Uterus (tissue), 4 donors: ENCODE measurements at regions of chr6 and their contacts with region 1.

Region 1: DNA sequence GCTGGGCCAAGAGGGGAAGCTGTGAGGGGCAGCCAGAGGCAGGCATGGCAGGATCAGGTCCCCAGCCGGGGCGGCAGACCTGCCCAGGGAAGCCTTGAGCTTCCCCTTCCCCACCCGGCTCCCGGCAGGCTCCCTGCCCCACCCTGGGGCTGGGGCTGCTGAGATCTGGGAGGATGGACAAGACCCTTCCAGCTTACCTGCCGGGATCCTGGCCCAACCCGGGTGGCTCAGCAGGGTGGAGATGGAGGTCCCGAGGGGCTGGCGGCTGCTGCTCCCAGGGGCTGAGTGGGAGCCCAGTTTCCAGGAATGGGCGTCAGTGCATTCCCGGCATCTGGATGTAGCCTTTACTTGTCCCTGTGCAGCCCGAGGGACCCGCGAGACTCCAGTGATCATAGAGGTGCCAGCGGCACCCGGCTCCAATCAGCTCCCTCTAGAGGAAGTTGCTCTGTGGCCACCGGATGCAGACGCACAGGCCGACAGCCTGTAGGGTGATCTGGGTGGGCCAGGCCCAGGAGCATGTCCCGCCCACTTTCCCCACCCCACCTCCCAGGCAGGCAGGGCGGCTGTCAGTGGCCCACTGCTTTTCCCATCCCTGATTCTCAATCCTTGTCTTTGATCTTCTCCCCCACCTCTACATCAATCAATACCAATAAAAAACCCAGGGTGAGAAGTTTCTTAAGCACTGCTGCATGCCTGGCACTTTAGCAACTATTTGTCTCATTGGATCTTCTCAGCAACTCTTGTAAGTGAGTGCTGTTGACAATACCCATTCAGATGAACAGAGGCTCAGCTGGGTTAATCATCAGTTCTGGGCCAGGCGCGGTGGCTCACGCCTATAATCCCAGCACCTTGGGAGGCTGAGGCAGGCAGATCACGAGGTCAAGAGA is at the start of gene BAK1:
- DNase-seq: peak; percentile 88 to 92
- H3K4me3 ChIP-seq: peak within 1 kb of the TSS; percentile 80 to 90
- H3K27ac ChIP-seq: peak within 1 kb of the TSS; percentile 81 to 87
- H3K4me1 ChIP-seq: peaks cover 5 to 11% of the 10 kb centered on the region in 2 donors
- H3K27me3 ChIP-seq: no peaks in the 10 kb centered on the region
- CTCF ChIP-seq: peak; percentile 38 to 65 (median 49)
- POLR2A ChIP-seq: peak; percentile 64 to 66
- total RNA-seq, gene BAK1: 0.88 to 15.3 (median 6.1) TPM

Region 2: GRCh38 chr6:33633462-33634158 is 53.5 kb after region 1 on chr6:
- intact Hi-C with region 1: loop called (anchors 10 kb)
- DNase-seq: peak; percentile 58 to 72
- H3K4me3 ChIP-seq: peak overlapping the region; percentile 24 to 40
- H3K27ac ChIP-seq: peak overlapping the region; percentile 8 to 33
- H3K4me1 ChIP-seq: peaks cover 5 to 7% of the 10 kb centered on the region in 2 donors
- H3K27me3 ChIP-seq: no peaks in the 10 kb centered on the region
- CTCF ChIP-seq: no peak
- POLR2A ChIP-seq: peak in 1 of 2 donors; percentile 26

Region 3: GRCh38 chr6:33696548-33697518 is 116.8 kb after region 1 on chr6:
- intact Hi-C with region 1: loop called (anchors 10 kb)
- DNase-seq: peak; percentile 56 to 66
- H3K4me3 ChIP-seq: no peak overlapping the region
- H3K27ac ChIP-seq: peak overlapping the region; percentile 50 to 64
- H3K4me1 ChIP-seq: peaks cover 0 to 17% of the 10 kb centered on the region in 2 donors
- H3K27me3 ChIP-seq: no peaks in the 10 kb centered on the region
- CTCF ChIP-seq: no peak
- POLR2A ChIP-seq: no peak

Region 4: DNA sequence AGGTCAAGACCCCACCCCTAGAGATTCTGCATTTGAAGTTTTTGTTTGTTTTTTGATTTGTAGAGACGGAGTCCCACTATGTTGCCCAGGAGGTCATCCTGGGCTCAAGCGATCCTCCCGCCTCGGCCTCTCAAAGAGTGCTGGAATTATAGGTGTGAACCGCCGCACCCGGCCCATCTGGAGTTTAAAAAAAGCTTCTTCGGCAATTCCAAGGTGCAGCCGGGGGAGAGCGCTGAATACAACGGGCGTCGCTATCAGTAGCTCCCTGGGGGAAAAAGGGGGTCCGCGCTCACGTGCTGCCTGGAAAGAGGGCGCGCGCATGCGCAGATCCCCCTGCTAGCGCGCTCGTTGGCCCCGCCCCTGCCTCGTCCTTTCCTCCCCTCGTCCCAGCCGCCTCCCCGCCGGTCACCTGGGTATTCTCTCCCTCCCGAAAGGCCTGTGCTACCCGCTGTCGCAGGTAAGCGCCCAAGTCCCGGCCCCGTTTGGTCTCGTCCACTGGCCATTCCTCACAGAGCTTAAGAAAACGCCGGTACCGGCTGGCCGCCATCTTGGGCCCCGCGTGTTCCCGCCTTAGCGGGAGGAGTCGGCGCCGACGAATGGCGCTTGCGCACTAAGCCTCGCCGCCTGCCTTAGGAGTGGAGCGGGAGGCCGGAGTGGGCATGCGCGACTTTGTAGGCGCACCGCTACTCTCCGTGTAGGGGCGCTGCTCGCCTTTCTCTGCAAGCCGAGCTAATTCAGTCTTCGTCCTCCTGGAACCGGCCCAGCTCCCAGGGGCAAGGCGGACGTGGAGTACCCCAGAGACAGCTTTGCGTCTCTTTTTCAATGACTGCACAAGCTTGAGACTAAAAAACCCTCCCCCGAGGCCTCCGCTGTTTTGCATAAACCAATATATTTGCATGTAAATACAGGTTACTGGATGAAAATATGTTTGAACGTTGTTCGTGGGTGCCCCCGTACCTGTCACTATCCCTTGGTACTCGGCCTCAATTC is 131.4 kb after region 1 on chr6 and contains the start of gene UQCC2:
- intact Hi-C with region 1: no loop called
- DNase-seq: peak; percentile 96 to 98
- H3K4me3 ChIP-seq: peak within 1 kb of the TSS; percentile 81 to 91
- H3K27ac ChIP-seq: peak within 1 kb of the TSS; percentile 93 to 96
- H3K4me1 ChIP-seq: peaks cover 5 to 7% of the 10 kb centered on the region in 2 donors
- H3K27me3 ChIP-seq: no peaks in the 10 kb centered on the region
- CTCF ChIP-seq: peak; percentile 73 to 87 (median 81)
- POLR2A ChIP-seq: peak; percentile 26 to 88
- total RNA-seq, gene UQCC2: 10.0 to 63.2 (median 30.9) TPM

Region 5: DNA sequence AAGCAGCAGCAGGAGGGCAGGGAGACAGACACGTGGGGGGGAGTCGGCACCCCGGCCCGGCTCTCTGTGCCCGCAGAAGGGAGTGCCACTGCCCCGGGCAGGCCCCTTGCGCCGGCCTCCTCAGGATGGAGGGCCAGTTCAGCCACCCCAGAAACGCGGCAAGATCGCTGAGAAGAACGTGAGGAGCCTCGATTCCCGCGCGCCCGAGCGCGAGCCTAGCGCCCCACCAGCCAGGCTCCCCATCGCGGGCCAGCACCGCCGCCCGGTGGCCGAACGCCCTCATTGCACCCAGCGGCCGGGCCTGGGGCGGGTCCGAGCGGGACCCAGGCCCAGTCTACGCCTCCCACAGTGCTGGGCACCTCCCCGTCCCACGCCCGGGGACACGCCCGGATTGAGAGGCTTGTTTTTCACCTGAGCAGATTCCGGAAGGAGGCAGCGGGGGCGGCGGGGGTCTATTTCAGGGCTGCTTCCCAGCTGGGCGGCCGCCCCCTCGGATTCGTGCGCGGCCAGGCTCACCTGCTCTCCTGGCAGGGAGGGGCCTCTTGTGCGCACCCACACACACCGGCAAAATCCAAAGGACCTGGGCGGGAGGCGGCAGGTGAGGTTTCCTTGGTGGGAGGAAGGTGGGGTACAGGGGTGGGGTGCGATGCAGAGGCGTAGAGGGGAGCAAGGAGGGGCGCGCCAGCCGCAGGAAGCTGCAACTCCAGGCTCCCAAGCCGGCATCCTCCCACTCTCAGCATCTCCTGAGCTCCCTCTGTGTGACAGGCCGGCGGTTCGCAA is 574.8 kb after region 1 on chr6:
- intact Hi-C with region 1: loop called (anchors 10 kb)
- DNase-seq: peak; percentile 24 to 60
- H3K4me3 ChIP-seq: no peak overlapping the region
- H3K27ac ChIP-seq: no peak overlapping the region
- H3K4me1 ChIP-seq: no peaks in the 10 kb centered on the region
- H3K27me3 ChIP-seq: no peaks in the 10 kb centered on the region
- CTCF ChIP-seq: peak; percentile 89 to 98 (median 96)
- POLR2A ChIP-seq: peak in 1 of 2 donors; percentile 36